Panc1 (cell line): ENCODE measurements at regions of chr11 and their contacts with region 1.

Region 1: GRCh38 chr11:25298443-25298842 is 801.6 kb downstream of the LUZP2 start:
- DNase-seq: no peak
- ATAC-seq: no peak
- H3K4me3 ChIP-seq: no peak overlapping the region
- H3K27ac ChIP-seq: no peak overlapping the region
- H3K4me1 ChIP-seq: no peaks in the 10 kb centered on the region
- H3K27me3 ChIP-seq: no peaks in the 10 kb centered on the region
- CTCF ChIP-seq: no peak

Region 2: GRCh38 chr11:24593332-24593731 is 705.1 kb before region 1 on chr11:
- CTCF ChIA-PET with region 1: no interaction called
- POLR2A ChIA-PET with region 1: interaction called, 11 read pairs
- in situ Hi-C with region 1: no loop called
- intact Hi-C with region 1: no loop called
- DNase-seq: no peak
- ATAC-seq: no peak
- H3K4me3 ChIP-seq: no peak overlapping the region
- H3K27ac ChIP-seq: no peak overlapping the region
- H3K4me1 ChIP-seq: no peaks in the 10 kb centered on the region
- H3K27me3 ChIP-seq: no peaks in the 10 kb centered on the region
- CTCF ChIP-seq: no peak